Caco-2 (cell line): ENCODE measurements at regions of chr20 and their contacts with region 1.

Region 1: GRCh38 chr20:32357869-32358631 is at the start of gene ASXL1:
- DNase-seq: peak; percentile 100
- H3K4me3 ChIP-seq: peak within 1 kb of the TSS; percentile 93
- H3K4me3 Mint-ChIP-seq: peak within 1 kb of the TSS; percentile 77
- H3K27ac Mint-ChIP-seq: peak within 1 kb of the TSS; percentile 95
- H3K4me1 ChIP-seq: peaks cover 53% of the 10 kb centered on the region
- H3K4me1 Mint-ChIP-seq: peaks cover 40% of the 10 kb centered on the region
- H3K27me3 ChIP-seq: no peaks in the 10 kb centered on the region
- H3K27me3 Mint-ChIP-seq: no peaks in the 10 kb centered on the region
- CTCF ChIP-seq: no peak
- total RNA-seq, gene ASXL1: 226 and 233 TPM in 2 replicates

Region 2: DNA sequence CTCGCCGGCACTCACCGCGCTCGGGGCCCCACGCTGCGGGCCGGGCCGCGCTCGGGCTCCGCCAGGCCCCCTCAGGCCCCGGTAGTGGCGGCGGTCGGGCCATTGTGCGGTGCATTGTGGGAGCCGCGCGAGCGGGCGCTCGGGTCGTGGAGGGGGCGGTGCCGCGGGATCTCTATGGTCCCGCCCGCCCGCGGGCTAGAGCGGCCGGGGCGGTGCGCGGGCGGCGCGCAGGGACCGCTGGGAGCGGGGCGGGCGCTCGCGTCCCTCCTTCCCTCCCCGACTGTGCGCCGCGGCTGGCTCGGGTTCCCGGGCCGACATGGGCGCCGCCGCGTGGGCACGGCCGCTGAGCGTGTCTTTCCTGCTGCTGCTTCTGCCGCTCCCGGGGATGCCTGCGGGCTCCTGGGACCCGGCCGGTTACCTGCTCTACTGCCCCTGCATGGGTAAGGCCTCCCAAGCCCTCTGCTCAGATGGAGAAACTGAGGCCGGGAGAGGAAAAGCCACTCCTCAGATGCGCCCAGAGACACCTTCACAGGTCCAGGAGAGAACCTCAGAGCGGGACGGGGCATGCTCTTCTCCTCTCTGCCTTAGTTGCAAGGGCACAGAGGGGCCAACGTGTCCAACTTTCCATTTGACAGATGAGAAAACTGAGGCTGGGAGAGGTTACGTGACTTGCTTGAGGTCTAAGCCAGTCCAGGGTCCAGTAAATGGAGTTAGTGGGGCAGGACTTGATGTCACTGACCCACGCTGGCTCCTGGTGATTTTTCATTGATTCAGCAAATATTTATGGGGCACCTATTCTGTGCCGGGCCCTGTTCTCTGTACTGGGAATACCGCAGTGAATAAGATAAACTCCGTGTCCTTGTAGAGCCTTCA is 150.2 kb before region 1 on chr20 and contains the starts of genes PLAGL2 and POFUT1:
- CTCF ChIA-PET with region 1: interaction called, 3 read pairs
- POLR2A ChIA-PET with region 1: no interaction called
- intact Hi-C with region 1: loop called (anchors 1 kb)
- DNase-seq: peak; percentile 95 to 100
- H3K4me3 ChIP-seq: peak within 1 kb of the TSS; percentile 72
- H3K4me3 Mint-ChIP-seq: peak within 1 kb of the TSS; percentile 92
- H3K27ac Mint-ChIP-seq: peak within 1 kb of the TSS; percentile 89
- H3K4me1 ChIP-seq: peaks cover 46% of the 10 kb centered on the region
- H3K4me1 Mint-ChIP-seq: peaks cover 71% of the 10 kb centered on the region
- H3K27me3 ChIP-seq: no peaks in the 10 kb centered on the region
- H3K27me3 Mint-ChIP-seq: no peaks in the 10 kb centered on the region
- CTCF ChIP-seq: peak; percentile 9 to 55
- total RNA-seq, gene PLAGL2: 89.6 and 96.1 TPM in 2 replicates
- total RNA-seq, gene POFUT1: 148 and 158 TPM in 2 replicates

Region 3: GRCh38 chr20:32240220-32240619 is 117.8 kb before region 1 on chr20:
- CTCF ChIA-PET with region 1: no interaction called
- POLR2A ChIA-PET with region 1: no interaction called
- intact Hi-C with region 1: loop called (anchors 5 kb)
- DNase-seq: peak in 1 of 2 experiments; percentile 68
- H3K4me3 ChIP-seq: no peak overlapping the region
- H3K4me3 Mint-ChIP-seq: no peak overlapping the region
- H3K27ac Mint-ChIP-seq: no peak overlapping the region
- H3K4me1 ChIP-seq: peaks cover 32% of the 10 kb centered on the region
- H3K4me1 Mint-ChIP-seq: peaks cover 31% of the 10 kb centered on the region
- H3K27me3 ChIP-seq: no peaks in the 10 kb centered on the region
- H3K27me3 Mint-ChIP-seq: no peaks in the 10 kb centered on the region
- CTCF ChIP-seq: peak; percentile 53 to 76

Region 4: GRCh38 chr20:32325706-32326503 is 32.1 kb before region 1 on chr20:
- CTCF ChIA-PET with region 1: no interaction called
- POLR2A ChIA-PET with region 1: interaction called, 4 read pairs
- intact Hi-C with region 1: loop called (anchors 1 kb)
- DNase-seq: peak; percentile 79 to 85
- H3K4me3 ChIP-seq: no peak overlapping the region
- H3K4me3 Mint-ChIP-seq: peak overlapping the region; percentile 41
- H3K27ac Mint-ChIP-seq: peak overlapping the region; percentile 78
- H3K4me1 ChIP-seq: peaks cover 45% of the 10 kb centered on the region
- H3K4me1 Mint-ChIP-seq: peaks cover 21% of the 10 kb centered on the region
- H3K27me3 ChIP-seq: no peaks in the 10 kb centered on the region
- H3K27me3 Mint-ChIP-seq: no peaks in the 10 kb centered on the region
- CTCF ChIP-seq: no peak

Region 5: GRCh38 chr20:32368925-32369324 is 10.9 kb after region 1 on chr20:
- CTCF ChIA-PET with region 1: no interaction called
- POLR2A ChIA-PET with region 1: interaction called, 8 read pairs
- intact Hi-C with region 1: loop called (anchors 1 kb)
- DNase-seq: no peak
- H3K4me3 ChIP-seq: no peak overlapping the region
- H3K4me3 Mint-ChIP-seq: no peak overlapping the region
- H3K27ac Mint-ChIP-seq: no peak overlapping the region
- H3K4me1 ChIP-seq: peaks cover 19% of the 10 kb centered on the region
- H3K4me1 Mint-ChIP-seq: peaks cover 36% of the 10 kb centered on the region
- H3K27me3 ChIP-seq: no peaks in the 10 kb centered on the region
- H3K27me3 Mint-ChIP-seq: no peaks in the 10 kb centered on the region
- CTCF ChIP-seq: no peak

Region 6: DNA sequence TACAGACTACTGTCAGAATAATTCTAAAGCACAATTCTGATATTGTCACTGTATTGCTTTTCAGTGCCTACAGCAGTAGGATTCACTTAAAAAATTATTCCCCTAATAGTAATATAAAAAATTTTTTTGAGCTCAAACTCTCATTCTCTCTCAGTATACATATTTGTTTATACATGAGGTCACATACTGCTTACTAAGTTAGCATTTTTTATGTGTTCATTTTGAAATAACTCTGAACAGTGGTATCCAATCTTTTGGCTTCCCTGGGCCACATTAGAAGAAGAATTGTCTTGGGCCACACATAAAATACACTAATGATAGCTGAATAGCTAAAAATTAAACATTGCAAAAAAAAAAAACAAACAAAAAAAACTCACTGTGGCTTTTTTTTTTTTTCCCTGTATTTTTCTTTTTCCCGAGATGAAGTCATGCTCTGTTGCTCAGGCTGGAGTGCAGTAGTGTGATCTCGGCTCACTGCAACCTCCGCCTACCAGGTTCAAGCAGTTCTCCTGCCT is 38.7 kb after region 1 on chr20:
- CTCF ChIA-PET with region 1: no interaction called
- POLR2A ChIA-PET with region 1: no interaction called
- intact Hi-C with region 1: no loop called
- DNase-seq: no peak
- H3K4me3 ChIP-seq: no peak overlapping the region
- H3K4me3 Mint-ChIP-seq: no peak overlapping the region
- H3K27ac Mint-ChIP-seq: no peak overlapping the region
- H3K4me1 ChIP-seq: no peaks in the 10 kb centered on the region
- H3K4me1 Mint-ChIP-seq: no peaks in the 10 kb centered on the region
- H3K27me3 ChIP-seq: no peaks in the 10 kb centered on the region
- H3K27me3 Mint-ChIP-seq: no peaks in the 10 kb centered on the region
- CTCF ChIP-seq: no peak

Region 7: DNA sequence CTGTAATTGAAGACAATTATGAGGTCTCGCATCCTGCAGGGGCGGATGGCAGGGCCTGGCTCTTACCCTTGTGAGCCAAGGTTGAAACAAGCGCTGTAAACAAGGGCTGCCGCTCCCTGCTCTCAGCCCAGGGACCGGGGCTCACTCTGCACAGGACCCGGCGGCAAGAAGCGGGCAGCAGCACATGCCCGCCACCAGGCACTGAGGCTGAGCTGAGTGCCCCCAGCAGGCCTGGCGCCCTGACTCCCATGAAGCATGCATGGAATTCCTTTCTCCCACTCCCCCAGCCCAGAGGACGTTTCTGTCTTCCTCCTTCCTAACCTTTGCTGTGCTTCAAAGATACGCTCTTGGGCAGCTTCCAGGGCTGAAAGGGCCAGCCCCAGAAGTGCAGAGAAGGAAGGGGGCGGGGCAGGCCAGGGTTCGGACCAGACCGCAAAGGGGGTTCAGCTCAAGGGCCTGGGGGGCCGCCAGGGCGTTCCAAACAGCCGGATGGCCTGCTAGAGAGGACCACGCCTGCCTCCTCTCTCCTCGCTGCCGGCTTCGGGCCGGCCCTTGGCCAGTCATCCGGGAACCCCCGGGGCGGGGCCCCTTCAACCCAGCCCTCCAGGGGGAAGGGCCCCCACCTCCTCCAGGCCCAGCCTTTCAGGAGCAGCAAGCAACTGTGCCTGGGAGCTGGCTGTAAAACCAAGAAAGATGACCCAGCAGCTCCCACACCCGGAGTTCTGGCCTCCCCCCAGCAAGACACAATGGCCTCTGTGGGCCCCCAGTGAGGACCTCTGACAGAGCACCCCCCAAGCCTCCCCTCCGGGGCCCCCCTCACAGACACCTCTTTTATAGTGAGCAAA is 117.1 kb after region 1 on chr20:
- CTCF ChIA-PET with region 1: no interaction called
- POLR2A ChIA-PET with region 1: interaction called, 8 read pairs
- intact Hi-C with region 1: loop called (anchors 2 kb)
- DNase-seq: peak; percentile 99 to 100
- H3K4me3 ChIP-seq: peak overlapping the region; percentile 42
- H3K4me3 Mint-ChIP-seq: peak overlapping the region; percentile 93
- H3K27ac Mint-ChIP-seq: peak overlapping the region; percentile 93
- H3K4me1 ChIP-seq: peaks cover 79% of the 10 kb centered on the region
- H3K4me1 Mint-ChIP-seq: peaks cover 69% of the 10 kb centered on the region
- H3K27me3 ChIP-seq: no peaks in the 10 kb centered on the region
- H3K27me3 Mint-ChIP-seq: no peaks in the 10 kb centered on the region
- CTCF ChIP-seq: peak in 1 of 2 experiments; percentile 18

Region 8: DNA sequence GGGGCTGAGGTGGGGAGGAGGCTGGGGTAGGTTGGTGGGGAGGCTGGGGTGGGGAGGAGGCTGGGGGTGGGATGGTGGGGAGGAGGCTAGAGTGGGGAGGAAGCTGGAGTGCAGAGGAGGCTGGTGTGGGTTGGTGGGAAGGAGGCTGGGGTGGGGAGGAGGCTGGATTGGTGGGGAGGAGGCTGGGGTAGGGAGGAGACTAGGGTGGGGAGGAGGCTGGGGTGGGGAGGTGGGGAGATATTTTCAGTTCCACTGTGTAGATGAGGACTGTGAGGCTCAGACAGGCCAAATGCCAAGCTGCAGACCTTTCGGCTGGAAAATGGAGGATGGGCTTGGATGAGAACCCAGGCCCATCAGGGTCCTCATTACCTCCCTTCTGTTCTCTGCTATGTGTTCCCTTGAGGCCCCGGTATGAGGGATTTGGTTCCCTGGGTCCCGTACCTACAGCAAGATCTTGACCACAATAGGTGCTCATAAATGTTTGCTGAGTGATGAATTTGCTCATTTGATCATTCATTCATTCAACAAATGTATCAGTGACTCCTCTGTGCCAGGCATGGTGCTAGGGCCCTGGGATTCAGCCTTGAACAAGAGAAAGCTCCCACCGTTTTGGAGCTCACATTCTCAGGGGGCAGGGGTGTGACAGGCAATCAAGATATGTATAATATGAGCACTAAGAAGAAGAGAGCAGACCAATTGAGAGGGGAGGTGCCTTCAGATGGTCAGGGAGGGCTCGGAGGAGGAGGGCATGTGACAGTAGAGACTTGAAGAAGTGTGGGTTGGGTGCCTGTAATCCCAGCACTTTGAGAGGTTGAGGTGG is 263.2 kb after region 1 on chr20:
- CTCF ChIA-PET with region 1: no interaction called
- POLR2A ChIA-PET with region 1: no interaction called
- intact Hi-C with region 1: no loop called
- DNase-seq: peak; percentile 64 to 91
- H3K4me3 ChIP-seq: no peak overlapping the region
- H3K4me3 Mint-ChIP-seq: no peak overlapping the region
- H3K27ac Mint-ChIP-seq: no peak overlapping the region
- H3K4me1 ChIP-seq: no peaks in the 10 kb centered on the region
- H3K4me1 Mint-ChIP-seq: no peaks in the 10 kb centered on the region
- H3K27me3 ChIP-seq: no peaks in the 10 kb centered on the region
- H3K27me3 Mint-ChIP-seq: peaks cover 4% of the 10 kb centered on the region
- CTCF ChIP-seq: no peak

Region 9: DNA sequence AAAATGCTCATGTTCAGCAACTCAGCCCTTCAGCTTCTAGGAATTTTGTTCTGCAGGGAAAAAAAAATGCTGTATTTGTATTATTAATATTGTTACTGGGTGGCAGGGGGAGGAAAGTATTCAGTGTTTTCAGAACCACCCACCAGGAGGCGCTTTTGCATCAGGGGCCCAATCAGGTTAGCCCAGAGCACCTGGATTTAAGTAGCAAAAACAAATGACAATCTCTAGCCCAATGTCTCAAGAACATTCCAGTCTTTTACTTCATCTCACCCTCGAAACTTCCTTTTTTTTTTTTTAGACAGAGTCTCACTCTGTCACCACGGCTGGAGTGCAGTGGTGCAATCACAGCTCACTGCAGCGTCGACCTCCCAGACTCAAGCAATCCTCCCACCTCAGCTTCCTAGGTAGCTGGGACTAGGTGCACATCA is 316.3 kb after region 1 on chr20:
- CTCF ChIA-PET with region 1: no interaction called
- POLR2A ChIA-PET with region 1: no interaction called
- intact Hi-C with region 1: no loop called
- DNase-seq: peak; percentile 79 to 91
- H3K4me3 ChIP-seq: no peak overlapping the region
- H3K4me3 Mint-ChIP-seq: no peak overlapping the region
- H3K27ac Mint-ChIP-seq: peak overlapping the region; percentile 74
- H3K4me1 ChIP-seq: peaks cover 13% of the 10 kb centered on the region; the same call in 1 of the 2 replicates
- H3K4me1 Mint-ChIP-seq: peaks cover 23% of the 10 kb centered on the region
- H3K27me3 ChIP-seq: no peaks in the 10 kb centered on the region
- H3K27me3 Mint-ChIP-seq: no peaks in the 10 kb centered on the region
- CTCF ChIP-seq: peak; percentile 97 to 99